ENCODE measurements at regions of chr5 and their contacts with region 1.

Region 1: DNA sequence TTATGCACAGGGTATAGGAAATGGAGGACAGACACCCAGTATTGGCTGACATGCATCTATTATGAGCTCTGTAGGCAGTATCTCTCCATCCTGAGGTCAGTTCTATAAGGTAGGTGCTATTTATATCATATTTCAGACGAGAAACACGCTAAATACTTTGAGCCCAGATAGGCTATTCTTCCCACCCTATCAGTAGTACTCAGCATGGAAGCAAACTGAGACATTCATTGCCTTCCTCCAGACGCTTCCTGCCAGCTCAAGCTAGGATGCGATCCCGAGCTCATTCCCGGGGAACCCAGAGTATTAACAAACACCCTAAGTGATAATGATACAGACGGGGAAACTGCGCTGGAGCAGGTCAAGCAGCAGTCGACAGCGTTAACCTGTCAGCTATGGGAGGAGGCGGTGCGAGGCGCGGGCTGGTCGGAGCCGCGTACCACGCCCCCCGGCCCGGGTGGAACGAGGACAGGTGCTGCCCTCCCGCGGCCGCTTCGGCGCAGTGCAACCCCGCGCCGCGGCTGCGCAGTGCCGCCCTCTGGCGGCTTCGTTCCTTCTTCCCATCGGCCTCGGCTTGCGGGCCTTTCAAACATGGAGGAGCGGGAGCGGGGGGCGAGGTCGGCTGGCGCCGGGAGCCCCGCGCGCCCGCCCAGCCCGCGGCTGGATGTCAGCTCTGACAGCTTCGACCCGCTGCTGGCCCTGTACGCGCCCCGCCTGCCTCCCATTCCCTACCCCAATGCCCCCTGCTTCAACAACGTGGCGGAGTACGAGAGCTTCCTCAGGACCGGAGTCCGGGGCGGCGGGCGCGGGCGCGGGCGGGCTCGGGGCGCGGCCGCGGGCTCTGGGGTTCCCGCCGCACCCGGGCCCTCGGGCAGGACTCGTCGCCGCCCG is at the start of gene LSM11:
- DNase-seq: peak; percentile 73 to 94 (median 87)
- ATAC-seq: peak; percentile 91 to 98 (median 93)
- H3K4me3 ChIP-seq: peak within 1 kb of the TSS; percentile 56 to 75
- H3K4me3 Mint-ChIP-seq: peak within 1 kb of the TSS; percentile 79 to 97 (median 92)
- H3K27ac ChIP-seq: no peak within 1 kb of the TSS
- H3K27ac Mint-ChIP-seq: peak within 1 kb of the TSS; percentile 4 to 86
- H3K4me1 ChIP-seq: peaks cover 11 to 13% of the 10 kb centered on the region in 2 experiments
- H3K4me1 Mint-ChIP-seq: peaks cover 23 to 30% (median 27%) of the 10 kb centered on the region in 3 donors
- H3K27me3 ChIP-seq: no peaks in the 10 kb centered on the region
- H3K27me3 Mint-ChIP-seq: no peaks in the 10 kb centered on the region
- total RNA-seq, gene LSM11: 1.7 to 4.2 (median 3.9) TPM

Region 2: GRCh38 chr5:157328277-157328912 is 415.0 kb before region 1 on chr5:
- CTCF ChIA-PET with region 1: interaction called, 3 to 10 read pairs
- POLR2A ChIA-PET with region 1: interaction called in 1 of 2 experiments, 3 read pairs
- DNase-seq: peak in 34 of 35 experiments; percentile 24 to 81 (median 42)
- ATAC-seq: peak; percentile 79 to 91 (median 88)
- H3K4me3 ChIP-seq: no peak overlapping the region
- H3K4me3 Mint-ChIP-seq: peak overlapping the region; percentile 14 to 67 (median 31)
- H3K27ac ChIP-seq: peak overlapping the region; percentile 54
- H3K27ac Mint-ChIP-seq: peak overlapping the region; percentile 78 to 87
- H3K4me1 ChIP-seq: peaks cover 18 to 23% of the 10 kb centered on the region in 2 experiments
- H3K4me1 Mint-ChIP-seq: peaks cover 35 to 43% (median 41%) of the 10 kb centered on the region in 3 donors
- H3K27me3 ChIP-seq: no peaks in the 10 kb centered on the region
- H3K27me3 Mint-ChIP-seq: no peaks in the 10 kb centered on the region

Region 3: DNA sequence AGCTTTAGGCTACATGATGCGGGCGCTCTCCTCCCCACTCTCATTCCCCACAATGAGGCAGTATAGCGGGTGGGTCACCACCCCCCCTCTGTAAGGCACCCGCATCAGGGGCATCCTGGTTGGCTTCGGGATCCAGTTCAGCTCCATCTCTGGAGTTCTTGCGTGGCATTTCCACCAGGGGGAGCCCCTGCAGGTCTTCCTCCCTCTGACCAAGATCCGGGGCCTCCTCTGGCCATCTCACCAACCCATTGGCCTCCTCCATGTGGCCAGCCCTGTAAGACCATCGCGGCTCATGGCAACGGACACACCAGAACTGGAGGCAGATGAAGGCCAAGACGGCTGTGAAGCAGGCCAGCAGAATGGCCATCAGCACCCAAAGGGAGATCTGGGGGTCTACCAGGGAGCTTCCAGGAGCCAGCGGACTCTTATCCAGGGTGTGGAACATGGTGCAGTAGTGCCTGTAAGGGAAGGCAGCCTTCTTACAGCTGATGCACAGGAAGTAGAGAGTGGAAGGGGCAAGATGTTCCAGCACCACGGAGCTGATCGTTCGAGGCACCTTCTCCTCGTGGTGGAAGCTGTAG is 400.5 kb before region 1 on chr5:
- CTCF ChIA-PET with region 1: interaction called, 4 to 11 read pairs
- POLR2A ChIA-PET with region 1: no interaction called
- DNase-seq: peak in 12 of 35 experiments; percentile 8 to 41 (median 15)
- ATAC-seq: peak in 2 of 4 experiments; percentile 36 to 55
- H3K4me3 ChIP-seq: no peak overlapping the region
- H3K4me3 Mint-ChIP-seq: no peak overlapping the region
- H3K27ac ChIP-seq: no peak overlapping the region
- H3K27ac Mint-ChIP-seq: peak overlapping the region; percentile 11 to 34
- H3K4me1 ChIP-seq: peaks cover 0 to 11% of the 10 kb centered on the region in 2 experiments
- H3K4me1 Mint-ChIP-seq: peaks cover 28 to 36% (median 30%) of the 10 kb centered on the region in 3 donors
- H3K27me3 ChIP-seq: no peaks in the 10 kb centered on the region
- H3K27me3 Mint-ChIP-seq: no peaks in the 10 kb centered on the region

Region 4: GRCh38 chr5:157431544-157432200 is 311.7 kb before region 1 on chr5:
- CTCF ChIA-PET with region 1: interaction called, 12 to 35 read pairs
- POLR2A ChIA-PET with region 1: interaction called in 1 of 2 experiments, 4 read pairs
- DNase-seq: peak in 14 of 35 experiments; percentile 1 to 68 (median 10)
- ATAC-seq: peak; percentile 76 to 88 (median 83)
- H3K4me3 ChIP-seq: no peak overlapping the region
- H3K4me3 Mint-ChIP-seq: no peak overlapping the region
- H3K27ac ChIP-seq: no peak overlapping the region
- H3K27ac Mint-ChIP-seq: peak overlapping the region in 1 of 2 donors; percentile 47
- H3K4me1 ChIP-seq: no peaks in the 10 kb centered on the region
- H3K4me1 Mint-ChIP-seq: peaks cover 0 to 7% (median 6%) of the 10 kb centered on the region in 3 donors
- H3K27me3 ChIP-seq: peaks cover 0 to 3% of the 10 kb centered on the region in 2 experiments
- H3K27me3 Mint-ChIP-seq: peaks cover 1 to 7% of the 10 kb centered on the region in 2 donors

Region 5: GRCh38 chr5:157657516-157657915 is 85.9 kb before region 1 on chr5:
- CTCF ChIA-PET with region 1: interaction called, 3 to 13 read pairs
- POLR2A ChIA-PET with region 1: no interaction called
- DNase-seq: no peak
- ATAC-seq: no peak
- H3K4me3 ChIP-seq: no peak overlapping the region
- H3K4me3 Mint-ChIP-seq: no peak overlapping the region
- H3K27ac ChIP-seq: no peak overlapping the region
- H3K27ac Mint-ChIP-seq: no peak overlapping the region
- H3K4me1 ChIP-seq: no peaks in the 10 kb centered on the region
- H3K4me1 Mint-ChIP-seq: peaks cover 6 to 9% (median 6%) of the 10 kb centered on the region in 3 donors
- H3K27me3 ChIP-seq: no peaks in the 10 kb centered on the region
- H3K27me3 Mint-ChIP-seq: no peaks in the 10 kb centered on the region

Region 6: DNA sequence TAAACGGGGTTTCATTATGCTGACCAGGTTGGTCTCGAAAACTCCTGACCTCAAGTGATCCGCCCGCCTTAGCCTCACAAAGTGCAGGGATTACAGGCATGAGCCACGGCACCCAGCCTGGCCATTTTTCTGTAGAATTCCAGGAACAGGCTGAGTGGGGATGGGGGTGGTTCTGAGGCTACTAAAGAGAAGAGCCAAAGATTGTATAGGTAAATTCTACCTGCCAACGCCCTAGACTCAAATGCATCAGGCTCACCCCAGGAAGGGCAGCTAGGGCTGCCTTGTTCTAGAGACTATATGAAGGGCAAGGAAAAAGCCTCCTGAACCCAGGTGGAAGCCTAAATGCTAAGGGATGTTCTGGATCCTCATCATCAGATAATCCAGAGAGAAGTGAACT is 73.7 kb before region 1 on chr5:
- CTCF ChIA-PET with region 1: interaction called, 3 to 12 read pairs
- POLR2A ChIA-PET with region 1: no interaction called
- DNase-seq: no peak
- ATAC-seq: no peak
- H3K4me3 ChIP-seq: no peak overlapping the region
- H3K4me3 Mint-ChIP-seq: peak overlapping the region in 2 of 3 donors; percentile 85 to 87
- H3K27ac ChIP-seq: no peak overlapping the region
- H3K27ac Mint-ChIP-seq: no peak overlapping the region
- H3K4me1 ChIP-seq: peaks cover 2 to 13% of the 10 kb centered on the region in 2 experiments
- H3K4me1 Mint-ChIP-seq: peaks cover 20 to 27% (median 24%) of the 10 kb centered on the region in 3 donors
- H3K27me3 ChIP-seq: peaks cover 0 to 32% of the 10 kb centered on the region in 2 experiments
- H3K27me3 Mint-ChIP-seq: peaks cover 27 to 35% of the 10 kb centered on the region in 2 donors

Region 7: GRCh38 chr5:157731272-157732129 is 11.9 kb before region 1 on chr5 and contains the start of gene THG1L:
- CTCF ChIA-PET with region 1: interaction called, 12 to 44 read pairs
- POLR2A ChIA-PET with region 1: interaction called in 1 of 2 experiments, 6 read pairs
- DNase-seq: peak; percentile 90 to 99 (median 95)
- ATAC-seq: peak; percentile 96 to 97 (median 96)
- H3K4me3 ChIP-seq: peak within 1 kb of the TSS; percentile 82 to 86
- H3K4me3 Mint-ChIP-seq: peak within 1 kb of the TSS; percentile 93 to 97 (median 96)
- H3K27ac ChIP-seq: peak within 1 kb of the TSS; percentile 78
- H3K27ac Mint-ChIP-seq: peak within 1 kb of the TSS; percentile 96 to 97
- H3K4me1 ChIP-seq: peaks cover 0 to 13% of the 10 kb centered on the region in 2 experiments
- H3K4me1 Mint-ChIP-seq: peaks cover 14 to 29% (median 25%) of the 10 kb centered on the region in 3 donors
- H3K27me3 ChIP-seq: no peaks in the 10 kb centered on the region
- H3K27me3 Mint-ChIP-seq: no peaks in the 10 kb centered on the region
- total RNA-seq, gene THG1L: 8.9 to 10.9 (median 9.4) TPM

Measured in T-cell (primary cell).